Right ventricle myocardium superior (tissue), 1 donor: ENCODE measurements at regions of chr3 and their contacts with region 1.

Region 1: GRCh38 chr3:99846462-99847160 is 28.9 kb downstream of the CMSS1 start:
- DNase-seq: no peak
- ATAC-seq: peak; percentile 60

Region 2: GRCh38 chr3:100057716-100058575 is 211.3 kb after region 1 on chr3:
- intact Hi-C with region 1: loop called (anchors 5 kb)
- DNase-seq: no peak
- ATAC-seq: peak; percentile 74